HepG2 (cell line): ENCODE measurements at regions of chr15 and their contacts with region 1.

Region 1: GRCh38 chr15:98442379-98442833 is 205.9 kb upstream of the IGF1R start:
- DNase-seq: peak; percentile 51
- ATAC-seq: peak; percentile 75
- H3K4me3 ChIP-seq: no peak overlapping the region
- H3K27ac ChIP-seq: no peak overlapping the region
- H3K4me1 ChIP-seq: no peaks in the 10 kb centered on the region
- H3K27me3 ChIP-seq: peaks cover 0 to 48% of the 10 kb centered on the region in 2 experiments
- CTCF ChIP-seq: peak; percentile 81
- EP300 ChIP-seq: no peak
- POLR2A ChIP-seq: no peak
- RAD21 ChIP-seq: 0 out of 2 replicates have a peak, but pooled peaks have one; percentile 52

Region 2: DNA sequence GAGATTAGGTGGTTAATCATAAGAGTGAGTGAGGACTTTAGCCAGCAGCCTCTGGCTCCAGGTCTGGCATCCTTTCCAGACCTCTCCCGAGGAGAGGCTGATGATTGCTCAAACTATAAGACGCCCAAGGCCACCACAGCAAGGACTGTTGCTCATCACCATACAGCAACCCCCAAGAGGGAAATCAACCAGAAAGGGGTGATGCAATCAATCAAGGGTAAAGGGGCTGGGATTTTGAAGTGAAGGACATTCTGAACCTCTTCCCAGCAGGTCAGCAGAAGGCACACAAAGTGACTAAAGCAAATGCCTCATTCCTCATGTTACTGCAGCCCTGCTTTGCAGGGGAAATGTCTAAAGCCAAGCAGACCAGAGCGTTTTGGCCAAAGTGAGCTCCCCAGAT is 41.4 kb before region 1 on chr15:
- CTCF ChIA-PET with region 1: no interaction called
- POLR2A ChIA-PET with region 1: no interaction called
- in situ Hi-C with region 1: no loop called
- intact Hi-C with region 1: no loop called
- DNase-seq: no peak
- ATAC-seq: no peak
- H3K4me3 ChIP-seq: no peak overlapping the region
- H3K27ac ChIP-seq: no peak overlapping the region
- H3K4me1 ChIP-seq: peaks cover 6% of the 10 kb centered on the region; the same call in 1 of the 2 replicates
- H3K27me3 ChIP-seq: peaks cover 0 to 6% of the 10 kb centered on the region in 2 experiments; a peak in 2 of 5 replicates
- CTCF ChIP-seq: no peak
- EP300 ChIP-seq: no peak
- POLR2A ChIP-seq: no peak
- RAD21 ChIP-seq: no peak

Region 3: DNA sequence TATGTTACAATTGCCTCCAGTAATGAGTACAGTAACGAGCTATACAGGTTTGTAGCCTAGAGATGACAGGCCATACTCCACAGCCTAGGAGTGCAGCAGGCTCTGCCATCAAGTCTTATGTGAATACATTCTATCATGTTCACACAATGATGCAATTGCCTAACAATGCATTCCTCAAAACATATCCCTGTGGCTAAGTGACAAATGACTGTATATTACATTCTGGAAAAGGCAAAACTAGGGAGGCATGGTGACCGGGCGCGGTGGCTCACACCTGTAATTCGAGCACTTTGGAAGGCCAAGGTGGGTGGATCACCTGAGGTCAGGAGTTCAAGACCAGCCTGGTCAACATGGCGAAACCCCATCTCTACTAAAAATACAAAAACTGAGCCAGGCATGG is 13.6 kb after region 1 on chr15:
- CTCF ChIA-PET with region 1: no interaction called
- POLR2A ChIA-PET with region 1: no interaction called
- in situ Hi-C with region 1: no loop called
- intact Hi-C with region 1: no loop called
- DNase-seq: no peak
- ATAC-seq: no peak
- H3K4me3 ChIP-seq: no peak overlapping the region
- H3K27ac ChIP-seq: no peak overlapping the region
- H3K4me1 ChIP-seq: no peaks in the 10 kb centered on the region
- H3K27me3 ChIP-seq: 0 out of 5 replicates have a peak, but pooled peaks cover 0 to 3% of the 10 kb centered on the region in 2 experiments
- CTCF ChIP-seq: no peak
- EP300 ChIP-seq: no peak
- POLR2A ChIP-seq: no peak
- RAD21 ChIP-seq: no peak

Region 4: GRCh38 chr15:98480844-98481243 is 38.4 kb after region 1 on chr15:
- CTCF ChIA-PET with region 1: no interaction called
- POLR2A ChIA-PET with region 1: no interaction called
- in situ Hi-C with region 1: no loop called
- intact Hi-C with region 1: no loop called
- DNase-seq: no peak
- ATAC-seq: no peak
- H3K4me3 ChIP-seq: no peak overlapping the region
- H3K27ac ChIP-seq: no peak overlapping the region
- H3K4me1 ChIP-seq: no peaks in the 10 kb centered on the region
- H3K27me3 ChIP-seq: peaks cover 1 to 11% of the 10 kb centered on the region in 2 experiments; a peak in 2 of 5 replicates
- CTCF ChIP-seq: no peak
- EP300 ChIP-seq: no peak
- POLR2A ChIP-seq: no peak
- RAD21 ChIP-seq: no peak

Region 5: GRCh38 chr15:98581715-98582114 is 139.3 kb after region 1 on chr15:
- CTCF ChIA-PET with region 1: no interaction called
- POLR2A ChIA-PET with region 1: no interaction called
- in situ Hi-C with region 1: no loop called
- intact Hi-C with region 1: no loop called
- DNase-seq: no peak
- ATAC-seq: peak; percentile 45; the same call in 1 of the 3 replicates
- H3K4me3 ChIP-seq: no peak overlapping the region
- H3K27ac ChIP-seq: no peak overlapping the region
- H3K4me1 ChIP-seq: no peaks in the 10 kb centered on the region
- H3K27me3 ChIP-seq: peaks cover 0 to 38% of the 10 kb centered on the region in 2 experiments; a peak in 2 of 5 replicates
- CTCF ChIP-seq: no peak
- EP300 ChIP-seq: no peak
- POLR2A ChIP-seq: no peak
- RAD21 ChIP-seq: no peak

Region 6: GRCh38 chr15:98658831-98659699 is 216.7 kb after region 1 on chr15:
- CTCF ChIA-PET with region 1: interaction called, 3 read pairs
- POLR2A ChIA-PET with region 1: no interaction called
- in situ Hi-C with region 1: no loop called
- intact Hi-C with region 1: loop called (anchors 5 kb)
- DNase-seq: peak; percentile 66
- ATAC-seq: peak; percentile 64
- H3K4me3 ChIP-seq: no peak overlapping the region
- H3K27ac ChIP-seq: no peak overlapping the region
- H3K4me1 ChIP-seq: peaks cover 99% of the 10 kb centered on the region
- H3K27me3 ChIP-seq: no peaks in the 10 kb centered on the region
- CTCF ChIP-seq: peak; percentile 89
- EP300 ChIP-seq: no peak
- POLR2A ChIP-seq: no peak
- RAD21 ChIP-seq: peak; percentile 60

Region 7: DNA sequence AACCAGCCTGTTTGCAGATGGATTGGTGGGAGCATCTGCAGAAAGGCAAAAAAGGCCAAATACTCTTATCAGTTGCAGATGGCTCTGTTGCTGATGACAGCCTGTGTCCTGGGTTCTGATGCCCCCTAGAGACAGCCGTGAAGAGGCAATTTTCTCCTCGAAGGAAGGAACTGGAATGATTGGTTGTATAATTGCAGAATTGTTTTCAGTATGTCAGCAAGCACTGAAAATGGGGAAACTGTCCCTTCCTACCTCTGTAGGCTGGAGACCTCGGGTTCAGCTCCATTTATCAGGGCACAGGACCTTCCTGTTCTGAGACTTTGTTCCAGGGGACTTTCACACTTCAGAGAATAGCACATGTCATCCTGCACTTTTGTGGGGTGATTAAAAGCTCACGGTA is 462.1 kb after region 1 on chr15:
- CTCF ChIA-PET with region 1: interaction called, 4 read pairs
- POLR2A ChIA-PET with region 1: no interaction called
- in situ Hi-C with region 1: no loop called
- intact Hi-C with region 1: loop called (anchors 2 kb)
- DNase-seq: peak; percentile 41
- ATAC-seq: peak; percentile 76
- H3K4me3 ChIP-seq: no peak overlapping the region
- H3K27ac ChIP-seq: no peak overlapping the region
- H3K4me1 ChIP-seq: peaks cover 23% of the 10 kb centered on the region; the same call in 1 of the 2 replicates
- H3K27me3 ChIP-seq: no peaks in the 10 kb centered on the region
- CTCF ChIP-seq: peak; percentile 73
- EP300 ChIP-seq: no peak
- POLR2A ChIP-seq: no peak
- RAD21 ChIP-seq: 0 out of 2 replicates have a peak, but pooled peaks have one; percentile 17

Region 8: DNA sequence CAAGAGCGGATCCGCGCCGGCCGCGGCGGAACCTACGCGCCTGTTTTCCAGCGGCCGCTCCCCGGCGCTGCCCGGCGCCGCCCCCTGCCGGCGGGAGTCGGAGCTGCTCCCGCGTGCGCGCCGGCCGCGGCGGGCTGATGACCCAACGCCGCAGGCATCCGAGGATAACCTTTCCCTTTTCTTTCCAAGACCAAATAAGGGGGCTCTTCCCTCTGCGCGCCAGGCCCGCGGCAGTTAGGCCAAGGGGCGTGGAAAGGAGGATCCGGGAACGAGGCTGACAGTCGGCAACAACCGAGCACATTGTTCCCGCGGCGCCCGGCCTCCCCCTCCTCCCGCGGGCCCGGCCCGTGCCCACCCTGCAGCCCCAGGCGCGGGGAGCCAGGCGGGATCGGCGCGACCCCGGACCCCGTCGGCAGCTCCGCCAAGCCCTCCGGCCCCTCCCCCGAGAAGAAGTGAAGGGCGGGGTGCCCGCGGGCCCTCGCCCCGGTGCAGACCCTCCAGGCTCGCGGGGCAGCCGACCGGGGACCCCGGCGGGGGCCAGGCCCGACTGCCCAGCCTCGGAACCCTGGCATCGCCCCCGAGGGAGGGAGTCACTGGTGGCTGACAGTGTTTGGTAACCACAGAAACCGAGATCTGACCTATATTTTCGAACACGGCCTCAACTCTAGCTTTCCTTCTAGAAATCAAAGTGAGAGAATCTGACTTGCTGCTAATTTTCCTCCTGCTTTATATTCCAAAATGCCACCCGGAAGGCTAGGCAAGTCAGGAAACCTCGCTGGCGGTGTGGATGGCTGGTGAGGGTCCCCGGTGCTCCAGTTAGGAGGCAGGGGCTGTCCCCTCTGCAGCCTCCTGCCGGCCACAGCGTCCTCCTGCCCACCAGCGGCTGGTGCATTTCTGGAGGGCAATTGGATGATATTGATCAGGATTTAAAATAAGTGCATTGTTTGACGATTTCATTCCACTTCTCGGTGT is 616.9 kb after region 1 on chr15:
- CTCF ChIA-PET with region 1: no interaction called
- POLR2A ChIA-PET with region 1: no interaction called
- in situ Hi-C with region 1: no loop called
- intact Hi-C with region 1: loop called (anchors 5 kb)
- DNase-seq: peak; percentile 65
- ATAC-seq: peak; percentile 86
- H3K4me3 ChIP-seq: peak overlapping the region; percentile 49 to 69 (median 53)
- H3K27ac ChIP-seq: no peak overlapping the region
- H3K4me1 ChIP-seq: peaks cover 23% of the 10 kb centered on the region; the same call in 1 of the 2 replicates
- H3K27me3 ChIP-seq: peaks cover 11 to 67% of the 10 kb centered on the region in 2 experiments; a peak in 4 of 5 replicates
- CTCF ChIP-seq: peak; percentile 66
- EP300 ChIP-seq: no peak
- POLR2A ChIP-seq: no peak
- RAD21 ChIP-seq: peak; percentile 65

Region 9: DNA sequence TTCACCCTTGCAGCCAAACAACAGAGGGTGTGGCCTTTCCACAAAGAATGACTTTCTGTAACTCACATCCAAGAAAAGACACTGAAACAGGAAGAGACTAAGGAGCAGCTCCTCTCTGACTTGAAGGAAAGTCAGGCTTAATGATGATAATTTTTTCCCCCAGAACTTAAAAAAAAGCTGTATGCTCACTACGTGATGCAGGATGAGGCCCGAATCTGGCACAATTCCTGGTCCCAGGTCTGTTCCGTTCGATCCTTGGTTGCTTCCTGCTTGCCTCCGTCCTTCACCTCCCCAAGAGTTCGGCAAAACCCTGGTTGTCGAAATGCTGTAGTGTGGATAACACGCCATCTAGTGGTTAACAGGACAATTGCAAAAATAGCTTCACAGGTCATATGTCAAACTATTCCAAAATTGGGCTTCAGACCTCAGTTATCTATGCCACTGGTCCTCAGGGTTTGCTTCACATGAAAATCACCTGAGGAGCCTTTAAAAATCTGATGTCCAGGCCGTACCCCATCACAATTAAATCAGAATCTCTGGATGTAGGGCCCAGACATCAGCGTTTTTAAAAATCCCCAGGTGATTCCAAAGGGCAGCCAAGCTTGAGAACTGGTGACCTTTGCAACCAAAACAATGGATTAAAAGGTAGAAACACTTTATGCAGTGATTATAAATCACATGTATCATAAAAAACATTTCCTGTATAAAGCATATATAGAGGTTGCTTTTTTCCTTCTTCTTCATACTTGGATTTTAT is 634.3 kb after region 1 on chr15:
- CTCF ChIA-PET with region 1: interaction called, 18 read pairs
- POLR2A ChIA-PET with region 1: no interaction called
- in situ Hi-C with region 1: loop called (anchors 5 kb)
- intact Hi-C with region 1: loop called (anchors 1 kb)
- DNase-seq: peak; percentile 67
- ATAC-seq: peak; percentile 86
- H3K4me3 ChIP-seq: peak overlapping the region in 2 of 3 experiments; percentile 27 to 31; a peak in 3 of 6 replicates
- H3K27ac ChIP-seq: no peak overlapping the region
- H3K4me1 ChIP-seq: peaks cover 9% of the 10 kb centered on the region
- H3K27me3 ChIP-seq: peaks cover 0 to 7% of the 10 kb centered on the region in 2 experiments; a peak in 2 of 5 replicates
- CTCF ChIP-seq: peak; percentile 91
- EP300 ChIP-seq: no peak
- POLR2A ChIP-seq: no peak
- RAD21 ChIP-seq: peak; percentile 77